PC-3 (cell line): ENCODE measurements at regions of chr20 and their contacts with region 1.

Region 1: GRCh38 chr20:25035921-25036320 is 22.0 kb downstream of the ACSS1 start:
- DNase-seq: no peak
- ATAC-seq: no peak
- H3K4me3 ChIP-seq: no peak overlapping the region
- H3K27ac ChIP-seq: no peak overlapping the region
- H3K4me1 ChIP-seq: peaks cover 14% of the 10 kb centered on the region
- H3K27me3 ChIP-seq: no peaks in the 10 kb centered on the region
- CTCF ChIP-seq: no peak

Region 2: DNA sequence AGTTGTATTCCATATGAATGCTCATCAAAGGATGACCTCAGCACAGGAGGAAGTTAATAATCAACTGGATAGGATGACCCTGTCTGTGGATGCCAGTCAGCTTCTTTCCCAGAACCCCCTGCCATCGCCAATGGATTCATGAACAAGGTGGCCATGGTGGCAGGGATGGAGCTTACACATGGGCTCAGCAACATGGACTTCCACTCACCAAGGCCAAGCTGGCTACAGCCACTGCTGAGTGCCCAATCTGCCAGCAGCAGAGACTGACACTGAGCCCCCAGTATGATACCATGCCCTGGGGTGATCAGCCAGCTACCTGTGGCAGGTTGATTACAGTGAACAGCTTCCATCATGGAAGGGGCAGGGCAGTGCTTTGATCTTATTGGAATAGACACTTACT is 90.7 kb after region 1 on chr20:
- CTCF ChIA-PET with region 1: no interaction called
- POLR2A ChIA-PET with region 1: no interaction called
- intact Hi-C with region 1: no loop called
- DNase-seq: no peak
- ATAC-seq: no peak
- H3K4me3 ChIP-seq: no peak overlapping the region
- H3K27ac ChIP-seq: no peak overlapping the region
- H3K4me1 ChIP-seq: no peaks in the 10 kb centered on the region
- H3K27me3 ChIP-seq: peaks cover 2% of the 10 kb centered on the region; the same call in 1 of the 2 replicates
- CTCF ChIP-seq: no peak

Region 3: GRCh38 chr20:25160467-25160866 is 124.5 kb after region 1 on chr20:
- CTCF ChIA-PET with region 1: no interaction called
- POLR2A ChIA-PET with region 1: interaction called, 17 read pairs
- intact Hi-C with region 1: no loop called
- DNase-seq: no peak
- ATAC-seq: no peak
- H3K4me3 ChIP-seq: no peak overlapping the region
- H3K27ac ChIP-seq: no peak overlapping the region
- H3K4me1 ChIP-seq: no peaks in the 10 kb centered on the region
- H3K27me3 ChIP-seq: no peaks in the 10 kb centered on the region
- CTCF ChIP-seq: no peak